ENCODE measurements at regions of chr18 and their contacts with region 1.

Region 1: DNA sequence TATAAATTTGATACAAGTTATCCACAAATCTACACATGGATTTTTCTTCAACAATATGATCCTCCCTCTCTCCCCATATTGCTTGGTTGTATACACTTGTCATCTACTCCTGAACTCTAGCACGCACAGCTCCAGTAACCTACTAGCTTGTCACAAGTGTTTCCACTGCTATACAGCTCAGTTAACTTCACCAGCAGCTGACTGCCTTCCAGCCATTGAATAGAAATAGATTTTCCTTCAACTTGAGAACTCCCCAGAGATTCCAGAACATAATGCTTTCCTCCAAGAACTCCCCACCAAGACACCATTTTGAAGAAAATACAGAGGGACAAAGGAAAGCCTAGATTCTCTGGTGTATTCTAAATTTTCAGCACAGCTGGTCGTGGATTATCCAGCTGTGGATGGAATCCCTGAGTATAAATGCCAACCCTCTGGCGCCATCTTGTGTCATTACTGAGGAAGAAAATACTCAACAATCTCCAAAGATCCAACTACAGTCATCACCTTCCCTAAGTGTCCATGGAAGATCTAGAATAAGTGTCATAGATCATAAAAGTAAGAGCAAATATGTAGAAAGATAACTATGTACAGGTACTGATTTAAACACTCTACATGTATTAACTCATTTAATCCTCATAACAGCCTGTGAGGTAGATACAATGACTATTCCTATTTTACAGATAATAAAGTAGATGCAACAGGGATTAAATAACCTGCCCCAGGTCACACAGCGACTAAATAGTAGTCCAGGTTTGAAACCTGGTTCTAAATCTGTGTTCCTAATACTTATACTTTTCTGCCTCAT is 156.7 kb downstream of the ARHGAP28 start:
- DNase-seq: peak in 1 of 2 donors; percentile 67
- ATAC-seq: peak in 7 of 8 donors; percentile 67 to 87 (median 73)
- H3K4me3 ChIP-seq: no peak overlapping the region
- H3K27ac ChIP-seq: no peak overlapping the region
- H3K4me1 ChIP-seq: peaks cover 0 to 6% (median 0%) of the 10 kb centered on the region in 9 donors
- H3K27me3 ChIP-seq: no peaks in the 10 kb centered on the region
- CTCF ChIP-seq: peak; percentile 42 to 88 (median 80)

Region 2: DNA sequence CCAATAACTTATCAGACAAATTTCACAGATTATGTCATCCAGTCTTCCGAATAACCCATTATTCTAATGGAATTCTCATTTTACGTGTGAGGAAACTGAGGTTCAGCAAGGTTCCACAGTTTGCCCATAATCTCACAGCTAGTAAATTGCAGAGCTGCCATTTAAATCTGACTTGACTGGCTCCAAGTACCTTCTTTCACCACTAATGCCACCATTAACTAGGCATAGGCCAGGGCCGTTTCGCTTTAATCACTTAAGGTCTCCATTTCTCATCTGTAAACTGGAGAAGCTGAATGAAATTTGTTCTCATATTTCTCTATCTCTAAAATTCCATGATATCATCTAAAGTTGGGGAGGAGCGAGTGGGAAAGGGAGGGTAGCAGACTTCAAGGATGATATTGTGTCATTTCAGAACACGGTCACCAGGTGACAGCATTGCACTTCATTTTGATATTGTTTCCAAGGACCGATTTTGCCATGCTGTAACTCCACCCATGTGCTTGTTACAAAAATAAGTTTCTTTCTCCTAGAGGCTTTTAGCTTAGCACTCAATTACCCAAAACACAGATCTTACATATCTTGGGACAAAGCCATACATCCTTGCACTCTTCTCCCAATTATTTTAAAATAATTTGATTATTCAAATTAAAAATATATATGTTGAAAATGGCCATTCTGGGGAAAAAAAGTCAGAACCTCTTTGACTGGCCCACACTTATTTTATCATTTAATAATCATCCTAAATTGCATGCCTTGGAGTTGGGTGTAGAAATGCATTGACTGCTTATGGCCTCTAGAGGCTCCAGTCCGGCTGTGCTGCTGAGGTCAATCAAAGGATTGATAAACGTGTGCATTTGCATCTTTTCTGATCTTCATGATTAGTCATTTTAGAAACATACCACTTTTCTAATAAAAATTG is 1812.9 kb before region 1 on chr18:
- intact Hi-C with region 1: loop called in 1 of 10 experiments (anchors 10 kb)
- DNase-seq: peak in 1 of 2 donors; percentile 6
- ATAC-seq: peak in 6 of 8 donors; percentile 39 to 71 (median 64)
- H3K4me3 ChIP-seq: no peak overlapping the region
- H3K27ac ChIP-seq: no peak overlapping the region
- H3K4me1 ChIP-seq: peaks cover 0 to 4% (median 0%) of the 10 kb centered on the region in 9 donors
- H3K27me3 ChIP-seq: peaks cover 0 to 23% (median 7%) of the 10 kb centered on the region in 7 donors
- CTCF ChIP-seq: peak; percentile 19 to 68 (median 55)

Region 3: GRCh38 chr18:5868218-5869115 is 1017.7 kb before region 1 on chr18:
- intact Hi-C with region 1: loop called in 5 of 10 experiments (anchors 5 to 10 kb)
- DNase-seq: peak; percentile 14 to 70
- ATAC-seq: peak; percentile 72 to 87 (median 82)
- H3K4me3 ChIP-seq: no peak overlapping the region
- H3K27ac ChIP-seq: no peak overlapping the region
- H3K4me1 ChIP-seq: no peaks in the 10 kb centered on the region
- H3K27me3 ChIP-seq: peaks cover 0 to 34% (median 6%) of the 10 kb centered on the region in 7 donors
- CTCF ChIP-seq: peak; percentile 43 to 88 (median 81)

Region 4: DNA sequence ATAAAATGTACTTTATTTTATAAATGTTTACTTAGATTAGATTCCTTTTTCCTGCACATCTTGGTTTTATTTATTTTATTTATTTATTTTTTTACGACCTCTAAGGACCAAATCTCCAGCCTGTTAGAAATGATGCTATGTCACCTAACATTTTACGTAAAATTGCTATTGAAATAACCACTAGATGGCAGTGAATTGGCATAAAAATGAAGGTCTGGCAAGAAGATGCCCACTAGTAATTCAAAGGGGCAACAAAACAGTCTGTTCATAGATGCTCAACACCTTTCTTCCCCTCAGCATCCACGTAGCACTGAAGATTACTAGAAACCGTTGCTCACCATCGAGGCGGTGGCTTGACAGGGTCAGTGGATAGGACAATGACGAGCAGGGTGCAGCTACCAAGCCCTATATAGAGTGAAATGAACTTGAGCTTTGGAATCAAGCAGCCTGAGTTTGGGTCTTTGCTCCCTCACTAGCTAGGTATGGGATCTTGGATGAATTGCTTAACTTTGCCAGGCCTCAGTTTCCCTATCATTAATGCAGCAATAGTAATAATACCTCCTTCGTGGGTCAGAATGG is 342.8 kb before region 1 on chr18:
- intact Hi-C with region 1: loop called (anchors 1 to 5 kb)
- DNase-seq: no peak
- ATAC-seq: peak in 1 of 8 donors; percentile 14
- H3K4me3 ChIP-seq: no peak overlapping the region
- H3K27ac ChIP-seq: no peak overlapping the region
- H3K4me1 ChIP-seq: peaks cover 0 to 10% (median 0%) of the 10 kb centered on the region in 9 donors
- H3K27me3 ChIP-seq: no peaks in the 10 kb centered on the region
- CTCF ChIP-seq: peak; percentile 52 to 77 (median 64)

Region 5: DNA sequence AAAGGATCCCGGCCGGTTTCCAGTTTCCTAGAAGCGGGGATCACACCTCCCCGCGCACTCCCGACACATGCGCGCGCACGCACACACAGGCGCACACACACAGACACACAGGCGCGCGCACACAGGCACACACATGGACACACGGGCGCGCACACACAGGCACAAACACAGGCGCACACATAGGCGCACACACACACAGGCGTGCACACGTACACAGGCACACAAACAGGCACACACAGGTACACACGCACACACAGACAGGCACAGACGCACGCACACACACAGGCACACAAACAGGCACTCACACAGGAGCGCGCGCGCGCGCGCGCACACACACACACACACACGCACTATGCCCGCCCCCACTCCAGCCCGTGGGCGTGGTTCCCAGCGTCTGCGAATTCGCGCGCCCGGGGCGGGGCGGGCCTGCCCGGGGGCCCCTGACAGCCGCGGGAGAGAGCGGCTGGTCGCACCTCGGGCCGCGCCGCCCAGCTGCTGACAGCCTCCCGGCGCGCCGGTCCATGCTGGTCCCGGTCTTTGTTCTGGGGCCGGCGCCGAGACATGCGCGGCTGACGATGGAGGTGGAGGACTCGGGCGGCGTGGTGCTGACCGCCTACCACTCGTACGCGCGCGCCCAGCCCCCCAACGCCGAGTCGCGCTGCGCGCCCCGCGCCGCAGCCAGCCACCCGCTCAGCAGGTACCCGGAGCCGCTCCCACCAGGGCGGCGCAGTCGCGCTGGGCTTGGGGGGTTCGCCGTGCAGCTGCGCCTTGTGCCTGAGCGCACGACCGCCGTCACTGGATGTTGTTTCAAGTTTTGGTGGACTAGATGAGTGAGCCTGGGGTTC is 156.7 kb before region 1 on chr18 and contains the start of gene ARHGAP28:
- intact Hi-C with region 1: loop called in 3 of 10 experiments (anchors 5 to 10 kb)
- DNase-seq: peak; percentile 79 to 83
- ATAC-seq: peak; percentile 93 to 98 (median 96)
- H3K4me3 ChIP-seq: peak within 1 kb of the TSS; percentile 40 to 78 (median 68)
- H3K27ac ChIP-seq: peak within 1 kb of the TSS; percentile 63 to 91 (median 82)
- H3K4me1 ChIP-seq: peaks cover 0 to 26% (median 8%) of the 10 kb centered on the region in 9 donors
- H3K27me3 ChIP-seq: peaks cover 0 to 7% (median 0%) of the 10 kb centered on the region in 7 donors
- CTCF ChIP-seq: peak in 8 of 9 donors; percentile 17 to 64 (median 36)
- total RNA-seq, gene ARHGAP28: 0.82 to 5.3 (median 2.6) TPM

Measured in heart right ventricle (tissue), 16 donors.